Endothelial cell of umbilical vein (primary cell): ENCODE measurements at regions of chr2 and their contacts with region 1.

Region 1: DNA sequence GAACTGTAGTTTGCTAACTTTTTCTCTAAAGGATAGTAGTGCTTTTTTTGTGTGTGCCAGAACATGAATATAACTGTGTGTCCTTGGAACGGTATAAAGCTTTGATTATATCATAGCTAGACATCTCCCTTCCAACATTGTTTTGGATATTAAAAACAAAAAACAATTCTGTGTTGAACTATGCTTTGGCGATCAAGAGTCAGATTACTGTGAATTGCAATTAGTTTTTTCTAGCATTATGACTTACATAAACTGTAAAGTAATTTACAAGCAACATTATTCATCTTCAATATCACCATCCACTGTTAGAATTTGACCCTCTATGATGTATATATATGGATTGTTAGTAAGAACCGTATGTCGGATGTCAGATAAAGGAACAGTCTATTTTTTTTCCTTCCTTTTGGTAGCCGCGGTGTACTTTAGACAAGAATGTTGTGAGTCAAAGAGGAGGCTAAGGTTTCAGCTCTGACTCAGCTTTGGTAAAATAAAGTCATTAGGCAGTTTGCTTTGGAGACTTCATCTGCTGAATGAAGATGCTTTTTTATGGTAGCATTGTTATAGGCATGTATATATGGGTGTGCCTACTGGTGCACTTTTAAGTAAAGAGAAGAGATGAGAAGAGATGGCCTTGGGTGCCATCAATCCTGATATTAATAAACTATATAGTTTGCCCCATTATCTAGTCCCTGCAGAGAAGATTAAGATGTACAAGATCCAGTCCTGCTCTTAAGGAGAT is 76.4 kb downstream of the LTBP1 start:
- DNase-seq: peak; percentile 98
- H3K4me3 ChIP-seq: no peak overlapping the region
- H3K27ac ChIP-seq: peak overlapping the region; percentile 88
- H3K4me1 ChIP-seq: peaks cover 41% of the 10 kb centered on the region
- H3K27me3 ChIP-seq: no peaks in the 10 kb centered on the region
- CTCF ChIP-seq: no peak
- POLR2A ChIP-seq: peak; percentile 52

Region 2: DNA sequence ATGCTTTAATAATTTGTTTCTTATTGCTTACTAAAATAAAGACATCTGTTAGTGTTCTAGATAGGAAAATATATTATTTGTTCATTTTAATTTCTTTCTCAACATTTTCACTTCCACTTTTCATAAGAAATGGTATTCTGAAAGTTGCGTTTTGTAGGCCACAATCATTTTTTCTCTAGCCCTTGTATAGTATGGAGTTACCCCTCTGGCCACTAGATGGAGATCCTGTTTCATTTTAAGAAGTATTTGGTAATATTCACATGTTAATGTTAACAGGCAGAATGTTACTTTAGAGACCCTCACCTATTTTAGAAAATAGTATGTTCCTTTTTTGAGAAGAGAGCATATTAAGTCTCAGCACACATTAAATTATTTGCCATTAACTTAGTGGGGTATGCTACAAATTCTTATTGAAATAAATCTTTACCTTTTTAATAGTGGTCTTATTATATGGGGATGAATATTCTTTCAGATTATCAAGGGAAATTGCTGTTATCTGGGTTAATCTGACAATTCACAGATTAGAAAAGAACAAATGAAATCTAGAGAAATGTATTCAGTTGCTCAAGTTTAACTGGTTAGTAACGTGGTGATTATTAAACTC is 469.2 kb before region 1 on chr2:
- CTCF ChIA-PET with region 1: no interaction called
- POLR2A ChIA-PET with region 1: no interaction called
- dilution Hi-C with region 1: no loop called
- intact Hi-C with region 1: loop called (anchors 5 kb)
- DNase-seq: peak; percentile 63
- H3K4me3 ChIP-seq: no peak overlapping the region
- H3K27ac ChIP-seq: no peak overlapping the region
- H3K4me1 ChIP-seq: peaks cover 7% of the 10 kb centered on the region
- H3K27me3 ChIP-seq: no peaks in the 10 kb centered on the region
- CTCF ChIP-seq: peak; percentile 50
- POLR2A ChIP-seq: no peak

Region 3: DNA sequence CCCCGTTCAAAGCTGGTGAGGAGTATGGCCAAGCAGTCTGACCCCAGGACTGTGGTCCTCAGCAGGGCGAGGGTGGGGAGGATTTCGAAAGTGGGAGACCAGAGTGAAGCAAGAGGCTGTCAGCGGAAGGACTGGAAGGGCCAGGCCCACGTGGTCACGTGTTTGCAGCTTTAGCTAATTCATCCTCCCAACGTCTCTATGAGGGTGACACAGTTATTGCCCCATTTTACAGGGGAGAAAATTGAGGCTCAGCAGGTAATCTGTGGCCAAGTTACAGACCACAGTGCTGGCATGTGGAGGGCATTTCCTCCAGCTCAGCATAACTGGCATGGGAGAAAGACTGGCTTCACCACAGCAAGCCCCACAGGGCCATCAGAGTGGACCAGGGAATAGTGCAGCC is 121.8 kb before region 1 on chr2:
- CTCF ChIA-PET with region 1: no interaction called
- POLR2A ChIA-PET with region 1: no interaction called
- dilution Hi-C with region 1: no loop called
- intact Hi-C with region 1: no loop called
- DNase-seq: no peak
- H3K4me3 ChIP-seq: no peak overlapping the region
- H3K27ac ChIP-seq: no peak overlapping the region
- H3K4me1 ChIP-seq: no peaks in the 10 kb centered on the region
- H3K27me3 ChIP-seq: peaks cover 28 to 40% of the 10 kb centered on the region in 2 experiments
- CTCF ChIP-seq: no peak
- POLR2A ChIP-seq: no peak

Region 4: GRCh38 chr2:32965523-32966171 is 57.5 kb before region 1 on chr2:
- CTCF ChIA-PET with region 1: interaction called, 4 read pairs
- POLR2A ChIA-PET with region 1: no interaction called
- dilution Hi-C with region 1: no loop called
- intact Hi-C with region 1: loop called (anchors 5 kb)
- DNase-seq: peak; percentile 43
- H3K4me3 ChIP-seq: no peak overlapping the region
- H3K27ac ChIP-seq: no peak overlapping the region
- H3K4me1 ChIP-seq: peaks cover 7% of the 10 kb centered on the region
- H3K27me3 ChIP-seq: no peaks in the 10 kb centered on the region
- CTCF ChIP-seq: no peak
- POLR2A ChIP-seq: no peak

Region 5: GRCh38 chr2:33069894-33070651 is 46.9 kb after region 1 on chr2:
- CTCF ChIA-PET with region 1: no interaction called
- POLR2A ChIA-PET with region 1: interaction called, 4 read pairs
- dilution Hi-C with region 1: no loop called
- intact Hi-C with region 1: loop called (anchors 1 kb)
- DNase-seq: peak; percentile 98
- H3K4me3 ChIP-seq: no peak overlapping the region
- H3K27ac ChIP-seq: peak overlapping the region; percentile 98
- H3K4me1 ChIP-seq: peaks cover 60% of the 10 kb centered on the region
- H3K27me3 ChIP-seq: no peaks in the 10 kb centered on the region
- CTCF ChIP-seq: no peak
- POLR2A ChIP-seq: no peak

Region 6: DNA sequence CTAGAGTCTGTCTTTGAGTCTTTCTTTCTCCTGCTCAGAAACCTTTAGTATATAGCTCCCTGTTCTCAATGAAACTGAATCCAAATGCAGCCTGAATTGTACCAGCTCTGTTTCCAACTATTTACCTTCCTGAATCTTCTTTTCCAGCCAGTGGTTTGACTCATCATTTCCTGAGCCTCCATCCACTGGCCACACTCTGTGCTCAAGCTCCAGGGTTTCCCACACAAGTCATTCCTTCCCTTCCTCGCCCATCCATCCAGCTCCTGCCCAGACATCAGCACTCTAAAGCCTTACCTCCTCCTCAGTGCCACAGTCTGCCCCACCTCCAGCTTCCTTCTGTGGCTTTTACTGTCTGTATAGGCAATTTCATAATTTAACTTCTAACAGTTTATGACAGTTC is 219.7 kb after region 1 on chr2:
- CTCF ChIA-PET with region 1: no interaction called
- POLR2A ChIA-PET with region 1: no interaction called
- dilution Hi-C with region 1: no loop called
- intact Hi-C with region 1: loop called (anchors 1 kb)
- DNase-seq: peak; percentile 90
- H3K4me3 ChIP-seq: no peak overlapping the region
- H3K27ac ChIP-seq: peak overlapping the region; percentile 72
- H3K4me1 ChIP-seq: peaks cover 48% of the 10 kb centered on the region
- H3K27me3 ChIP-seq: no peaks in the 10 kb centered on the region
- CTCF ChIP-seq: no peak
- POLR2A ChIP-seq: no peak

Region 7: GRCh38 chr2:33342171-33342570 is 319.0 kb after region 1 on chr2:
- CTCF ChIA-PET with region 1: no interaction called
- POLR2A ChIA-PET with region 1: no interaction called
- dilution Hi-C with region 1: no loop called
- intact Hi-C with region 1: loop called (anchors 1 kb)
- DNase-seq: peak; percentile 98
- H3K4me3 ChIP-seq: no peak overlapping the region
- H3K27ac ChIP-seq: peak overlapping the region; percentile 99
- H3K4me1 ChIP-seq: peaks cover 28% of the 10 kb centered on the region
- H3K27me3 ChIP-seq: no peaks in the 10 kb centered on the region
- CTCF ChIP-seq: no peak
- POLR2A ChIP-seq: peak; percentile 40

Region 8: DNA sequence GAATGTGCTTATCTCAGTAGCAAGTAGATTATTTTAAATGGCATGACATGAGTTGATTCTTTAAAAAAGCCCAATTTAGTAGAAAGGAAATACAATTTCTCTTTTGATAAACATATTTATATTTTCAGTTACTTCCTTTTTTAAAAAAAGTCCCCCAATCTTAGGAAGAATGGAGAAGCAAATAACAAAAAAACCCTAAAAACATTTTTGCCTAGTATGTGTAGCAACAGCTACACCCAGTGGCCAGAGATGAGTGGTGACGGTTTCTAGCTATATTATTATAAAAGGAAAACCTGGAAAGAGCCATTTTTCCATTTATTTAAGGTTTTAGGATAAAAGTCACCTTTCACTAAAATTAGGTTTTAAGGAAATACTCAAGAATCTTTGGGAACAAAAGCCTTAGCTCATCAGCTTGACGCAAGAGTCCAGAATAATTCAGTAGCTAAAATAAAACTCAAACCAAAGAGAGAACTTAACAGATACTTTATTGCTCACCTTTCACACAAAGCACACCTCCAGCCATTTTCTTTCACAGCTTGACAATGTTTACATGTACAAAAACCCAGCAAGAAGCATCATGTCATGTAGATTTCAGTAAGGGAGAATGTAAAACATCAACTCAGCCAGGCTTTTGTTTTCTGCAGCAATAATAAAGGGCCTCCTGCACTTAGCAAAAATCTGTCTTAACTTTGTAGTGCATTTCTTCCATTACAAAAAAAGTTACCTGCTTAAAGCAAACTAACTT is 560.2 kb after region 1 on chr2:
- CTCF ChIA-PET with region 1: interaction called, 3 read pairs
- POLR2A ChIA-PET with region 1: no interaction called
- dilution Hi-C with region 1: no loop called
- intact Hi-C with region 1: loop called (anchors 10 kb)
- DNase-seq: peak; percentile 64
- H3K4me3 ChIP-seq: no peak overlapping the region
- H3K27ac ChIP-seq: no peak overlapping the region
- H3K4me1 ChIP-seq: peaks cover 3% of the 10 kb centered on the region
- H3K27me3 ChIP-seq: no peaks in the 10 kb centered on the region
- CTCF ChIP-seq: peak; percentile 63 to 66
- POLR2A ChIP-seq: no peak